ENCODE measurements at regions of chr10 and their contacts with region 1.

Region 1: DNA sequence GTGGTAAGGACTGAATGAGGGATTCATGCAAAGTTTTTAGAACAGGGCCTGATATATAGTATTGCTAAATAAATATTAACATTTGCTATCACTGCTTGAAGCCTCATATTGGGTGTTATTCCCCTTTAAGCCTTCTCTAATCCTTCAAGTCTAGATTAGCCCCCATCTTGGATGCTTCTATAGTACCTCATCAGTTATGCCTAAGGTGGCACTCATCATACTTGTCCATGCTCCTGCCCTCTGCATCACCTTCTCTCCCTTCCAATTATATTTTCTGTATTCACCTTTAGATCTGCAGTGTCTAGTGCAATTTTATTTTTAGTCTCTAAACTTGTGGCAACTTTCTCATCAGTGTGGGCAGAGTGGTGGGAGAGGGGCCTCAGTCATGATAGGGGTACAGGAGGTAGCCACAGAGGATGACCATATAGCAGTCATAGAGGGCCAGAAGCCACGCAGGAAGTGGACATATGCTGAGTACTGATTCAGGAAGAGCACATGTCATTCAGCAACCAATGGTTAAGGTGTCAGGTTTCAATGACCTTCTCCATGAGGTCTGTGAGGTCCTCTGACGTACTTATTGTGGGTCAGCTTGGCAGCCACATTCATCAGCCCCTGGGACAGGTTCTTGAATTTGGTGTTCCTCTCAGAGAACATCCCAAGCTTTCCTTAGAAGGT is 2.5 kb downstream of the ENTPD1 start:
- DNase-seq: peak; percentile 20
- H3K4me3 Mint-ChIP-seq: no peak overlapping the region
- H3K27ac Mint-ChIP-seq: peak overlapping the region; percentile 18
- H3K4me1 Mint-ChIP-seq: peaks cover 18% of the 10 kb centered on the region
- H3K27me3 Mint-ChIP-seq: peaks cover 23% of the 10 kb centered on the region

Region 2: GRCh38 chr10:95664543-95664942 is 93.9 kb before region 1 on chr10:
- CTCF ChIA-PET with region 1: no interaction called
- POLR2A ChIA-PET with region 1: no interaction called
- intact Hi-C with region 1: no loop called
- DNase-seq: no peak
- H3K4me3 Mint-ChIP-seq: no peak overlapping the region
- H3K27ac Mint-ChIP-seq: no peak overlapping the region
- H3K4me1 Mint-ChIP-seq: no peaks in the 10 kb centered on the region
- H3K27me3 Mint-ChIP-seq: no peaks in the 10 kb centered on the region

Region 3: DNA sequence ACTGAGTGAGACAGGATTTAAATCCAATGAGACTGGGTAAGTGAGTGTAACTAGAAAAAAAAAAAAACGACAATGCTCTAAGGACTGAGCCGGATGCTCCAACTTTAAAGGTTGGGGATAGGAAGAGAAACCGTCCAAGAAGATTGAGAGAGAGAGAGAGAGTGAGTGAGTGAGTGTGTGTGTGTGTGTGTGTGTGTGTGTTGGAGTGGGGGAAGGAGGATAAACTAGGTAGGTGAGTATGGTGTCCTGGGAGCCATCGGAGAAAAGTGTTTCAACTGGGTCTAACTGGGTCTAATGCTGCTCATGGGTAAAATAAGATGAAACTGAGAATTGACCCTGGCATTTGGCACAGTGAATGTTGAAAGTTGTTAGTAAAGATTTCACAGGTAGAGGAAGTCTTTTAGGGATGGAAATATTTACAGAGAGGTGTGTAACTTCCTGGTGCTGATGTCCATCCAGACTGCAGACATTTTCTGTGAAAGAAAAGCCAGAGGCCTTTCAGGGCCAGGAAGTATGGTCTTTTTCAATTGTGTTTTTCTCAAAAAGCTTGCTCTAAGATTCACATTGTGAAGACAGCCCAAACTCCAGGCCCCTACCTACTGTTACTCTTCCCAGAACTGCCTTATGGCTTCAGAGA is 11.7 kb after region 1 on chr10:
- CTCF ChIA-PET with region 1: no interaction called
- POLR2A ChIA-PET with region 1: no interaction called
- intact Hi-C with region 1: no loop called
- DNase-seq: no peak
- H3K4me3 Mint-ChIP-seq: no peak overlapping the region
- H3K27ac Mint-ChIP-seq: no peak overlapping the region
- H3K4me1 Mint-ChIP-seq: no peaks in the 10 kb centered on the region
- H3K27me3 Mint-ChIP-seq: no peaks in the 10 kb centered on the region

Region 4: DNA sequence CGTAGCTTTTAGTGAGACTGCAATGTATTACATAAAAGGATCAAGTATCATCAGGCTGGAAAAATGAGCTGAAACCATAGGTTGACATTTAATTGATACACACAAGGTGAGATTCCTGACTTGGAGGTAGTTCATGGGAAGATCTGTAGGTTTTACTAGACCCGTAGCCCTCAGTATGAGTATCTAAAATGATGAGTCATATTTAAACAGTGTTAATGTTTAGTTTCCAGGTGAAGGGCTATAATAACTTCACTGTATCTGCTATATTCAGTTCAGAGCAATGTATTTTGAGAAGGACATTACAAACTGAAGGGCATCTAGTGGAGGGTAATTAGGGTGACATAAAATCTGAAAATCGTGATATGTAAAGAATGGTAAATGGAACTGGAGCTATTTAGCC is 32.5 kb after region 1 on chr10:
- CTCF ChIA-PET with region 1: no interaction called
- POLR2A ChIA-PET with region 1: no interaction called
- intact Hi-C with region 1: loop called (anchors 2 kb)
- DNase-seq: no peak
- H3K4me3 Mint-ChIP-seq: no peak overlapping the region
- H3K27ac Mint-ChIP-seq: no peak overlapping the region
- H3K4me1 Mint-ChIP-seq: peaks cover 12% of the 10 kb centered on the region
- H3K27me3 Mint-ChIP-seq: peaks cover 5% of the 10 kb centered on the region